Heart left ventricle (tissue), 16 donors: ENCODE measurements at regions of chr7 and their contacts with region 1.

Region 1: DNA sequence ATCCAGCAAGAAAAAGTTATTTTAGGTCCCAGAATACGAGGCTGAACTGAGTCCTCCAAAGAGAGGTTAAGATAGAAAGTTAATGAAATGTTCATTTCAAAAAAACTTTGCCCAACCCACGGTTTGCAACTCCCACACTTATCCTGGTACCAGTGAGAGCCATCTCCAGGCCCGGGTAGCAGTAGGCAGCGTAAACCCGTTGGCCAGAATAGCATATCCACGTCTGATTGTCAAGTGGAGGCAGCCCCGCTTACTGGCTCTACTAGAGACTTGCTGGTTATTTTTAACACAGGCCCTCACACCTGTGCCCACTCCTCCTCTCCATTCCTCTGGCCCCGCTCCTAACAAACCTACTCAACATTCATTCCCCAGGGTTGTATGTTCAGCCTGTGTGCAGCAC is 109.7 kb downstream of the HIP1 start:
- DNase-seq: peak in 1 of 5 donors; percentile 40
- ATAC-seq: peak in 3 of 4 donors; percentile 45 to 59 (median 54)
- H3K4me3 ChIP-seq: no peak overlapping the region
- H3K27ac ChIP-seq: no peak overlapping the region
- H3K4me1 ChIP-seq: peaks cover 0 to 15% (median 4%) of the 10 kb centered on the region in 12 donors
- H3K27me3 ChIP-seq: no peaks in the 10 kb centered on the region
- CTCF ChIP-seq: no peak
- POLR2A ChIP-seq: no peak

Region 2: GRCh38 chr7:75572396-75572795 is 56.6 kb before region 1 on chr7:
- intact Hi-C with region 1: loop called in 1 of 10 experiments (anchors 5 kb)
- DNase-seq: no peak
- ATAC-seq: no peak
- H3K4me3 ChIP-seq: no peak overlapping the region
- H3K27ac ChIP-seq: no peak overlapping the region
- H3K4me1 ChIP-seq: peaks cover 0 to 12% (median 0%) of the 10 kb centered on the region in 12 donors
- H3K27me3 ChIP-seq: no peaks in the 10 kb centered on the region
- CTCF ChIP-seq: no peak
- POLR2A ChIP-seq: no peak